Ovary (tissue), 10 donors: ENCODE measurements at regions of chr21 and their contacts with region 1.

Region 1: DNA sequence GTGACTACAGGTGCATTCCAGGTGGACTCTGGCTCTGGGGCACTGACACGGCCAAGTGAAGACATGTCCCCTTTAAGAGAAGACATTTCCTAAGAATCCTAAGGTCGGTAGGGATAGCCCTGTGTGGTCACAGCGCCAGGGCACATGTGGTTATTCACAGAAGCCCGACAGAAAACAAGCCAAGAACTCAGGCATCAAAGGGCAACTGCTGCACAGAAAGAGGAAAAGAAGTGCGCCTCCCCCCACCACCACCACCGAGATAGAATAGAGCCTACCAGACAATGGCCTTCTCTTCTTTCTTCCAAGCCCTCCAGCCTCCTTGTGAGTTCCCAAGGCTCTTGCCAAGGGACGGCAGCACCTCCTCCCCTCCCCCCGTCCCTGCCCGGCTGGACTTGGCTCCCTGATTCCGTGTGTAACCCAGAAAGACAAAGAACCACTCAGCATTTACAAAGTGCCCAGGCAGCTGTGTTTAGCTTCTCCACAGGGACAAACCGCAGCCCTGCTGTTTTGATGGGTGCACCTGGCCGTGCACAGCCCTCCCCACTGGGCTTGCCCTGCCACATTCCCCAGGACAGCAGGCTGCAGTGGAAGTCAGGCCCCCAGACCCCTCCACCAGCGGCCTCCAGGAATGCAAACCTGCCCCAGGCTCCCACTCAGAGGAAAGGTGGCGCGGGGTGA is 30.2 kb downstream of the TMPRSS2 start:
- DNase-seq: no peak
- H3K4me3 ChIP-seq: no peak overlapping the region
- H3K27ac ChIP-seq: no peak overlapping the region
- H3K4me1 ChIP-seq: no peaks in the 10 kb centered on the region
- H3K27me3 ChIP-seq: no peaks in the 10 kb centered on the region
- CTCF ChIP-seq: no peak
- EP300 ChIP-seq: no peak
- POLR2A ChIP-seq: no peak

Region 2: DNA sequence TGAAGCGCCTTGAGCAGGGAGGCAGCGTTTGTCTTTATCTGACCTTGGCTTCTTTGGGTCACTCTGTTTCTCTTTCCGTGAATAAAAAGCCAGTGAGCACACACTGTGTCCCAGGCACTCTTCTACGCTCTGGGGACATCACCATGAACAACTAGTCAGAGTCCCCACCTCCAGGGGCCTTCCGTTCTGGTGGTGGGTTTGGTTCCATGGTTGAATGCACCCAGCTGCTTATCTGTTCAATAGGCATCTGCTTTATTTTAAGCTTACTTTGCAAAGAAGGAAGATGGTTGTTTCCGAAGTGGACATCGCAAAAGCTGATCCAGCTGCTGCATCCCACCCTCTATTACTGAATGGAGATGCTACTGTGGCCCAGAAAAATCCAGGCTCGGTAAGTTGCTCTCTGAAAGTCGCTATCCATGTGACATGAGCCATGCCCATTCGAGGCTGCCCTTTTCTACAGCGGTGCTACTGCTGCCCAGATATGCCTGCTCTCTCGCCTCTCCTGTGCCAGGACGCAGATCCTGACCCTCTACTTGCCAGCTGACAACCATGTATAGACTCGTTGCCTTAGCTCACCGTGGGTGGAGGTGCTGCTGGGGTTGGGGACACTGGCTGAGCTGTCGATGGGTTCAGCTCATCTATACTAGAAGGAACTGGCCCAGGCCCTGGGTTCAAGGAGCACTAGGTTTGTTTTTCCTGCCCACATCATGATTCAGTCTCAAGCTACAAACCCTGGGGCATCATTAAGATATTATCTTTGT is 45.8 kb before region 1 on chr21:
- intact Hi-C with region 1: no loop called
- DNase-seq: no peak
- H3K4me3 ChIP-seq: no peak overlapping the region
- H3K27ac ChIP-seq: no peak overlapping the region
- H3K4me1 ChIP-seq: no peaks in the 10 kb centered on the region
- H3K27me3 ChIP-seq: no peaks in the 10 kb centered on the region
- CTCF ChIP-seq: no peak
- EP300 ChIP-seq: no peak
- POLR2A ChIP-seq: no peak

Region 3: GRCh38 chr21:41601573-41602368 is 124.0 kb after region 1 on chr21:
- intact Hi-C with region 1: loop called in 1 of 4 experiments (anchors 10 kb)
- DNase-seq: no peak
- H3K4me3 ChIP-seq: no peak overlapping the region
- H3K27ac ChIP-seq: no peak overlapping the region
- H3K4me1 ChIP-seq: peaks cover 3% of the 10 kb centered on the region
- H3K27me3 ChIP-seq: no peaks in the 10 kb centered on the region
- CTCF ChIP-seq: no peak
- EP300 ChIP-seq: no peak
- POLR2A ChIP-seq: no peak

Region 4: DNA sequence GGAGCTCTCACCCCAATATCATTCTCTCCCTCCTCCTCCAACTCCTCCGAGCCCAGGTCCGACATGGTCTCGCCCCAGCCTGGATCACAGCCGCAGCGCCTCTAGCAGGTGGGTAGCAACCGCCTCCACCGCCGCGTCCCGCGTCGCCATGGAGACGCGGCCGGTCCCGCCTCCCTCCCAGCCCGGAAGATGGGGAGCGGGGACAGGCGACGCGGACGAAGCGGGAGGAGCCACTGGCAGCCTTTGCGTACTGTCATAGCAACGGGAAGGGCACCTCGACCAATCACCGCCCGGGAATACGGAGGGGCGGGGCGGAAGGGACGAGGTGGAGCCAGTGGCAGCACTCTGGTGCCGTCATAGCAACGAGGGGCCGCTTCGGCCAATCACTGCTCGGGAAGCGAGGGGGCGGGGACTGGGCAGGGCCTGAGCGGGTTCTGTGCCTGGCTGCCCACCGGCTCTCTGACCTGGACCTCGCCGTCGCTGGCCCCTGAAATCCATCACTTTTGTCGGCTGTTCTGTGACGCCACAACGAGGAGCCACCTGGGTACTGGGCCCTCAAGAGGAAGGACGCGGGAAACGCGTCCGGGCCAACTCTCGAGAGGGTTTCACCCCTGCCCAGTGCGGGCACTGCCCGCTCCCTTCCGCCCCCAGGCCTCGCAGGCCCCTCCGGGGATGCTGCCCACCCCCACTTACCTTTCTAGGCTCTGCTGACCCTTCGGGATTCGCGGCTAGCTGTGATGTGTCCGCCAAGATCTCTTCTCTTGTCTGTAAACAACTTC is 1018.5 kb after region 1 on chr21 and contains the start of gene RSPH1:
- intact Hi-C with region 1: loop called in 1 of 4 experiments (anchors 10 kb)
- DNase-seq: peak; percentile 100
- H3K4me3 ChIP-seq: peak within 1 kb of the TSS; percentile 60
- H3K27ac ChIP-seq: peak within 1 kb of the TSS; percentile 66 to 86
- H3K4me1 ChIP-seq: peaks cover 4% of the 10 kb centered on the region
- H3K27me3 ChIP-seq: no peaks in the 10 kb centered on the region
- CTCF ChIP-seq: no peak
- EP300 ChIP-seq: no peak
- POLR2A ChIP-seq: peak; percentile 93
- total RNA-seq, gene RSPH1: 0.76 to 37.5 (median 2.6) TPM